ENCODE measurements at regions of chr10 and their contacts with region 1.

Region 1: GRCh38 chr10:12710594-12711349 is 290.7 kb downstream of the CCDC3 start:
- DNase-seq: no peak
- ATAC-seq: peak; percentile 58; the same call in 1 of the 2 replicates
- H3K4me3 ChIP-seq: no peak overlapping the region
- H3K27ac ChIP-seq: peak overlapping the region; percentile 66; the same call in 1 of the 2 replicates
- H3K4me1 ChIP-seq: peaks cover 31% of the 10 kb centered on the region
- H3K27me3 ChIP-seq: no peaks in the 10 kb centered on the region
- CTCF ChIP-seq: peak; percentile 92

Region 2: DNA sequence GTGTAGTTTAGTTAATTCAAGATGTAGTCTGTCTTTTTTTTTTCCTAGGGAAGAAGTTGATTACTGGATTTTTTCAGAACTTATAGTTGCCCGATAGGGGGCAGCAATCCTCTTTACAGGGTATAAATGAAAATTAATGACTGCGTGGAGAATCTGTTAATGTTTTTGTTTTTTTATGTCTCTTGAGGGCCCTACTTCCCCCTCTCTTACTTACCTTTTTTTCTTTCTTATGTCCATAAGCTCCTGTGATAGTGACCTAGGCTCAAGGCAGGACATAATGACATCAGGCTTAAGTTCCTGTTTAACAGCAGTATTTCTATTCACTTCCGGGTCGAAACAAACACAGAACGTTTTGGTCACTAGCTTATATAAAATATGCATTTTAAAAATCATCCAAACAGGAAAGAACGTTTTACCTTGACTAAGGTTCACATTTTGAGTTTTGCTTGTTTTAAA is 496.0 kb before region 1 on chr10:
- CTCF ChIA-PET with region 1: no interaction called
- POLR2A ChIA-PET with region 1: no interaction called
- in situ Hi-C with region 1: no loop called
- intact Hi-C with region 1: no loop called
- DNase-seq: no peak
- ATAC-seq: no peak
- H3K4me3 ChIP-seq: no peak overlapping the region
- H3K27ac ChIP-seq: no peak overlapping the region
- H3K4me1 ChIP-seq: no peaks in the 10 kb centered on the region
- H3K27me3 ChIP-seq: no peaks in the 10 kb centered on the region
- CTCF ChIP-seq: peak; percentile 70; the same call in 1 of the 2 replicates

Region 3: GRCh38 chr10:12264204-12264940 is 446.4 kb before region 1 on chr10:
- CTCF ChIA-PET with region 1: interaction called, 7 read pairs
- POLR2A ChIA-PET with region 1: no interaction called
- in situ Hi-C with region 1: no loop called
- intact Hi-C with region 1: loop called (anchors 2 kb)
- DNase-seq: no peak
- ATAC-seq: peak; percentile 95
- H3K4me3 ChIP-seq: peak overlapping the region; percentile 32 to 57
- H3K27ac ChIP-seq: no peak overlapping the region
- H3K4me1 ChIP-seq: no peaks in the 10 kb centered on the region
- H3K27me3 ChIP-seq: no peaks in the 10 kb centered on the region
- CTCF ChIP-seq: peak; percentile 91

Region 4: DNA sequence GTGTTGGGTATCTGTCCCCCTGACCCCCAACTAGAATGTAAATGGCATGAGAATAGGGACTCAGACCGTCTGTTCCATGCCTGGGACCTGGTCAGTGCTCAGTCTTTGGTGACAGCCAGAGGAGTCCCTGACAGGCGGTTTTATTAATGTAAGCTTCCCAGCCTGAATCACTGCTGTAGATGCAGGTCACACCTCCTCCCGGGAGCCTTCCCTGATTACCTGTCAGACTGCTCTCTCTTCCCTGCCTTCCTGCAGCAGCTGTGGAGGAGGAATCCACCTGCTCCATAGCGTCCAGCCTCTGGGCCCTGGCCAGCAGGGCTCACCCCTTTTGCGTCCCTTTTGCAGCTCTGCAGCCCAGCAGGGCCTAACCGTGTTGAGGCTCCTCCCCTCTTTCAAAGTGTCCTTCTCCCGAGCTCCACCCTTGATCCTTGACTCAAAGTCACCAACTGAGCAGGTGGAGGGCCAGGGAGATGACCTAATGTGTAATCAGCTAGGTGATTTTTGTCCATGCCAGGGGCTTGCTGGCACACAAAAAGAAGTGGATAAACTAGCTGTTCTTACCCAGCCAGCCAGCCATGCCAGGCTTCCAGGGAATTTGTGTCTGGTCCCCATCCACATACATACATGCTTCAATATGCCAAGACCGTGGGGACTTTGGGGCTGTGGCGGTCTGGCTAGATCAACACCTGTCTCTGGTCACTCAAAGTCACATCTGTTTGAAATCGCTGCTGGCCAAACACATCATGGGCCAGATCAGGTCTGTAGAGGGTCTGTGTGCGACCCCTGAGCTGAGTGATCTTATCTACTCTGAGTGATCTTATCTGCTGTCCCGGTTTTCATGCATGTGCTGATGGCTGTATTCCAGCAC is 95.7 kb after region 1 on chr10:
- CTCF ChIA-PET with region 1: interaction called, 10 read pairs
- POLR2A ChIA-PET with region 1: no interaction called
- in situ Hi-C with region 1: no loop called
- intact Hi-C with region 1: no loop called
- DNase-seq: no peak
- ATAC-seq: no peak
- H3K4me3 ChIP-seq: no peak overlapping the region
- H3K27ac ChIP-seq: no peak overlapping the region
- H3K4me1 ChIP-seq: no peaks in the 10 kb centered on the region
- H3K27me3 ChIP-seq: no peaks in the 10 kb centered on the region
- CTCF ChIP-seq: no peak

Region 5: DNA sequence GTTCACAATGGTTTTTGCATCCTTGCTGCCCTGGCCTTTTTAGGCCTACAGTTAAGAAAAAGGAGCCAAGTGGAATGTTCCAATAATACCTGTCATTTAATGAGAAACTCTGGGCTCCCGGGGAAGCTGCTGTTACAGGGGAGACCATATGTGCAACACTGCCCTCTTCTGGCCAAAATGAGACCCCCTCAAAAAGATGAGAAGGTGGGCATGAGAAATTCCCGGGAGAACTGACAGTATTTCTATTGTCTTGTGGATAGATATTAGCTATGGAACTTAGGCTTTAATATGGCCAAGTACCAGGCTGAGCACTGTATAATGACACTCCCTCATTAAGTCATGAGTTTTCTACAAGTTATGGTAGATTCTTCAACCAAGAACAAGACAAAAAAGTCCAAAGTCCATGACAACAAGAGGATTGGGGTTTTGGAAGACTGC is 191.4 kb after region 1 on chr10:
- CTCF ChIA-PET with region 1: interaction called, 3 read pairs
- POLR2A ChIA-PET with region 1: no interaction called
- in situ Hi-C with region 1: no loop called
- intact Hi-C with region 1: loop called (anchors 10 kb)
- DNase-seq: peak; percentile 8
- ATAC-seq: no peak
- H3K4me3 ChIP-seq: no peak overlapping the region
- H3K27ac ChIP-seq: no peak overlapping the region
- H3K4me1 ChIP-seq: no peaks in the 10 kb centered on the region
- H3K27me3 ChIP-seq: no peaks in the 10 kb centered on the region
- CTCF ChIP-seq: peak; percentile 76

Measured in Panc1 (cell line).